Panc1 (cell line): ENCODE measurements at regions of chr1 and their contacts with region 1.

Region 1: DNA sequence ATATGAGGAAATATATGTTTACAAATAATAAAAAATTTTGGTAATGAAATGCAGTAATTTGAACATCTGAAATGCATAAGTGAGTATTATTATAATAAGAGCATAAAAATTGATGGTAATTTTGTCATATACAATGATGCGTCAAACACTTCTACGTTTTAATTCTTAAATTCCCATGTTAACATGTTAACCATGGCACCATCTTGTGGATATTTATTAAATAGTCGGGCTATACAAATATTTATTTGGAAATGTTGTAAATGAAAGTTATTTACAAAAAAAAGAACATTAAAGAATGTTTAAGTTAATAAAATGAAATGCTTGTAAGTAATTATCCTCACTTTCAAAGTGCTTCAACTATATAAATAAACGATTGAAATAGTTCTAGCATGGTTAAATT is 57.2 kb upstream of the C1orf185 start:
- DNase-seq: no peak
- ATAC-seq: no peak
- H3K4me3 ChIP-seq: no peak overlapping the region
- H3K27ac ChIP-seq: no peak overlapping the region
- H3K4me1 ChIP-seq: 0 out of 2 replicates have a peak, but pooled peaks cover 3% of the 10 kb centered on the region
- H3K27me3 ChIP-seq: no peaks in the 10 kb centered on the region
- CTCF ChIP-seq: peak; percentile 24; the same call in 1 of the 2 replicates

Region 2: GRCh38 chr1:50774759-50775351 is 270.0 kb before region 1 on chr1:
- CTCF ChIA-PET with region 1: no interaction called
- POLR2A ChIA-PET with region 1: no interaction called
- in situ Hi-C with region 1: no loop called
- intact Hi-C with region 1: loop called (anchors 10 kb)
- DNase-seq: peak; percentile 15
- ATAC-seq: peak; percentile 74; the same call in 1 of the 2 replicates
- H3K4me3 ChIP-seq: no peak overlapping the region
- H3K27ac ChIP-seq: no peak overlapping the region
- H3K4me1 ChIP-seq: no peaks in the 10 kb centered on the region
- H3K27me3 ChIP-seq: no peaks in the 10 kb centered on the region
- CTCF ChIP-seq: peak; percentile 74; the same call in 1 of the 2 replicates

Region 3: GRCh38 chr1:50873458-50874187 is 171.2 kb before region 1 on chr1:
- CTCF ChIA-PET with region 1: no interaction called
- POLR2A ChIA-PET with region 1: no interaction called
- in situ Hi-C with region 1: no loop called
- intact Hi-C with region 1: loop called (anchors 2 kb)
- DNase-seq: peak; percentile 65
- ATAC-seq: peak; percentile 98
- H3K4me3 ChIP-seq: peak overlapping the region; percentile 23 to 54
- H3K27ac ChIP-seq: peak overlapping the region; percentile 18; the same call in 1 of the 2 replicates
- H3K4me1 ChIP-seq: peaks cover 5% of the 10 kb centered on the region; the same call in 1 of the 2 replicates
- H3K27me3 ChIP-seq: no peaks in the 10 kb centered on the region
- CTCF ChIP-seq: peak; percentile 95

Region 4: DNA sequence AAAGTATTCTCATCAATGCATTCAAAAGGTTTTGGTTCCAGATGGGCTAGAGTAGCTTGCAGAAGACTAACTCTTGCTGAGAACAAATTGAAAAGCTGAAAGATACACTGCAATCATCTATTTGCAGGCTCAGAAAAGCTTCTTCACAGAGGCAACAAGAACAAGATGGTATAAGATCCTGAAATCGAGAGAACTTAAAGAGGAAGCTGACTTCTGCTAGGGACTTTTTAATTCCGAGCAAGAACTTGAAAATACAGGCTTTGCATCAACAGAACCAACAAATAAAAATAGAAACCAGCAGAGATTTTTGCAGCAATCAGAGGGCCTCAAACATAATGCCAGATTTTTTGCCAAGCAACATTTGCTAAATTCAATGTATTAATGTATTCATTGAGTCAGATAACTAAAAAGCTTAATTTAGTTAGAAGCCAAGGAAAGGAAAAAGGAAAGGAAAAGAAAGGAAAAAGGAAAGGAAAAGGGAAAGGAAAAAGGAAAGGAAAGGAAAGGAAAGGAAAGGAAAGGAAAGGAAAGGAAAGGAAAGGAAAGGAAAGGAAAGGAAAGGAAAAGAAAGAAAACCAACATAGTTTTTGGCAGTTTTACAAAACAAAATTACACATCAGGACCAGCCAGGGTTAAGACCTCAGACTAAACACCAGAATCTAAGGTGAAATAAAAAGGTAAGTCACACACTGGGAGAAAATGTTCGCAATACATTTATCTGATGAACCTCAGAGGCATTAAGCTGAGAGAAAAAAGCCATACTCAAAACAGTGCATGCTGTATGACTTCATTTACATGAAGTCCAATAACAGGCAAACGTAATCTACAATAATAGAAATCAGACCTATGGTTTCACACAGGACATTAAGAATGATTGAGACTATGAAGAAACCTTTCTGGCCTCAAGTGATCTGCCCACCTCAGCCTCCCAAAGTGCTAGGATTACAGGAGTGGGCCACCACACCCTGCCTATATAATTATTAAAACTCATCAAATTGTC is 127.4 kb before region 1 on chr1:
- CTCF ChIA-PET with region 1: no interaction called
- POLR2A ChIA-PET with region 1: no interaction called
- in situ Hi-C with region 1: no loop called
- intact Hi-C with region 1: no loop called
- DNase-seq: no peak
- ATAC-seq: no peak
- H3K4me3 ChIP-seq: no peak overlapping the region
- H3K27ac ChIP-seq: no peak overlapping the region
- H3K4me1 ChIP-seq: no peaks in the 10 kb centered on the region
- H3K27me3 ChIP-seq: no peaks in the 10 kb centered on the region
- CTCF ChIP-seq: no peak

Region 5: GRCh38 chr1:50978144-50978851 is 66.5 kb before region 1 on chr1:
- CTCF ChIA-PET with region 1: no interaction called
- POLR2A ChIA-PET with region 1: no interaction called
- in situ Hi-C with region 1: no loop called
- intact Hi-C with region 1: loop called (anchors 2 kb)
- DNase-seq: no peak
- ATAC-seq: peak; percentile 81
- H3K4me3 ChIP-seq: peak overlapping the region; percentile 80 to 83
- H3K27ac ChIP-seq: peak overlapping the region; percentile 100
- H3K4me1 ChIP-seq: peaks cover 52% of the 10 kb centered on the region
- H3K27me3 ChIP-seq: no peaks in the 10 kb centered on the region
- CTCF ChIP-seq: no peak

Region 6: DNA sequence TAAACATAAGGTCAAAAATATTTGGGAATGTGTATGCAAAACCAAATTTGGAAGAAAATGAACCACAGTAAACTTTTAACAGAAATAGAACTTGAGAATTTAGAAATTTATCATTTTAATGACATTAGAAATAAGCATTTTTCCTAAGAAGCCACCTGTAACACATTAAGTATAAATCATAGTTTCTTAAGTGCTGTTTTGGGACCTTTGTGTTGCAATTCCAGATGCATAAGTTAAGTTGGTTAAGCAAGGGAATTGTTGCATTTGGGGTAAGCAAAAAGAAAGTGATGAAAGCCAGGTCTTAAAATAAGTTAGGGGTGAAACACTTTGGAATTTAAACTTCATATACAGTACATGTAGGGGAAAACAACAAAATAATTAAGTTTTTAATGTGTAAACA is 25.0 kb before region 1 on chr1:
- CTCF ChIA-PET with region 1: no interaction called
- POLR2A ChIA-PET with region 1: no interaction called
- in situ Hi-C with region 1: no loop called
- intact Hi-C with region 1: no loop called
- DNase-seq: no peak
- ATAC-seq: no peak
- H3K4me3 ChIP-seq: no peak overlapping the region
- H3K27ac ChIP-seq: no peak overlapping the region
- H3K4me1 ChIP-seq: no peaks in the 10 kb centered on the region
- H3K27me3 ChIP-seq: no peaks in the 10 kb centered on the region
- CTCF ChIP-seq: no peak

Region 7: DNA sequence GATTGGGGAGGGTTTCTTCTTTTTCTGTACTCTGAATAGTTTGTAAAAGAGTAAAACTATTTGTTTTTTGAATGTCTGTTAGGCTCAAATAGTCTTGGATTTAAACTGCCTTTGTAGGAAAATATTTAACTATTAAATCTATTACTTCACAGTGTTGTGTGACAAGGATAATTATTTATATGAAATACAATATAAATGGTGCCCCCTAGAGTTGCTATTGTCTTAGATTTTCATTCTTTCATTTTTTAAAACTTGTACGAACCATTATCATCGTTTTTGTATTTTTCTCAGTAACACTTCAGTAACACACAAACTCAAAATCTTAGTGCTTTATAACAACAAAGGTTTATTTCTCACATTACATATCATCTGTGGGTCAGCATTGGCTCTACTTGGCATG is 94.6 kb after region 1 on chr1:
- CTCF ChIA-PET with region 1: no interaction called
- POLR2A ChIA-PET with region 1: no interaction called
- in situ Hi-C with region 1: no loop called
- intact Hi-C with region 1: no loop called
- DNase-seq: no peak
- ATAC-seq: no peak
- H3K4me3 ChIP-seq: no peak overlapping the region
- H3K27ac ChIP-seq: no peak overlapping the region
- H3K4me1 ChIP-seq: no peaks in the 10 kb centered on the region
- H3K27me3 ChIP-seq: no peaks in the 10 kb centered on the region
- CTCF ChIP-seq: no peak; the same call in 1 of the 2 replicates

Region 8: GRCh38 chr1:51157395-51157794 is 112.6 kb after region 1 on chr1:
- CTCF ChIA-PET with region 1: no interaction called
- POLR2A ChIA-PET with region 1: no interaction called
- in situ Hi-C with region 1: no loop called
- intact Hi-C with region 1: no loop called
- DNase-seq: no peak
- ATAC-seq: no peak
- H3K4me3 ChIP-seq: no peak overlapping the region
- H3K27ac ChIP-seq: no peak overlapping the region
- H3K4me1 ChIP-seq: no peaks in the 10 kb centered on the region
- H3K27me3 ChIP-seq: no peaks in the 10 kb centered on the region
- CTCF ChIP-seq: no peak